GM23248 (cell line): ENCODE measurements at regions of chr1 and their contacts with region 1.

Region 1: GRCh38 chr1:78607334-78607927 is 12.8 kb upstream of the IFI44L start:
- DNase-seq: peak; percentile 57
- H3K4me3 ChIP-seq: no peak overlapping the region
- H3K27ac ChIP-seq: no peak overlapping the region
- H3K4me1 ChIP-seq: no peaks in the 10 kb centered on the region
- H3K27me3 ChIP-seq: no peaks in the 10 kb centered on the region

Region 2: DNA sequence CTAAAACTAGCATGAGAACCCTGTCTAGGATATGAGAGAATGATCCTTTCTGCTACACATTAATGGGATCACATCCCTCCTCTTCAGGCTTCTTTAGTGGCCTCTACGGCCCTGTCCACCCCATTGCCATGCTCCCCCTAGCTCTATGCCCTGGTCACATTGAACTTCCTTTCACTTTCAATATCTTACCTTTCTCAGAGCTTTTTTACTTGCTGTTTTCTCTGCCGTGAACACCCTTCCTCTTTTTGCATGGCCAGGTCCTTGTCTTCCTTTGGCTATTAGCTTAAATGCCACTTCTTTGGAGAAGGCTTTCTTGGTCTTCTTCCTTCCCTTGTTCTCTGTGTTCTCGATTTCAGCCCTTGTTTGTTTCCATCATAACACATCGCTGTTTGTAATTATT is 464.3 kb before region 1 on chr1:
- in situ Hi-C with region 1: loop called (anchors 5 kb)
- DNase-seq: peak; percentile 5
- H3K4me3 ChIP-seq: 0 out of 2 replicates have a peak overlapping the region, but pooled peaks have one; percentile 11
- H3K27ac ChIP-seq: no peak overlapping the region
- H3K4me1 ChIP-seq: peaks cover 17% of the 10 kb centered on the region
- H3K27me3 ChIP-seq: no peaks in the 10 kb centered on the region

Region 3: DNA sequence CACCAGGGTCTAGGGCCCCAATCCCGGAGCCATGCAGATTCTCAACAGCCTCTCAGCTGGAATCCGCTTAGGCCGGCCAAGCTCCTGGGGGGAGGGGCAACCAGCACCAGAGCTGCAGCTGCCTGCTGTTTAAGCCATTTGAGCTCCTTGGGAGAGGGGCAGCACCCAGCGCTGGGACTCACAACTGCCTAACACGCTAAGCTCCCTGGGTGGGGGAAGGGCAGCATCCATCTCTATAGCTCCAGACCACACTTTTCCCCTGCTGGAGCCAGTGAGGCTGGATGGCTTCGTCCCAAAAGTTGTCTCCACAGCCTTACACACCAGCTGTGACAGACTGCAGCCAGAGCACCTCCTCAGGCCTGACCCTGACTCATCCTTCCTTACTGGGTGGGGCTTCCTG is 123.5 kb before region 1 on chr1:
- in situ Hi-C with region 1: no loop called
- DNase-seq: peak; percentile 77
- H3K4me3 ChIP-seq: no peak overlapping the region
- H3K27ac ChIP-seq: no peak overlapping the region
- H3K4me1 ChIP-seq: peaks cover 9% of the 10 kb centered on the region
- H3K27me3 ChIP-seq: no peaks in the 10 kb centered on the region